HEK293 (cell line): ENCODE measurements at regions of chr5 and their contacts with region 1.

Region 1: DNA sequence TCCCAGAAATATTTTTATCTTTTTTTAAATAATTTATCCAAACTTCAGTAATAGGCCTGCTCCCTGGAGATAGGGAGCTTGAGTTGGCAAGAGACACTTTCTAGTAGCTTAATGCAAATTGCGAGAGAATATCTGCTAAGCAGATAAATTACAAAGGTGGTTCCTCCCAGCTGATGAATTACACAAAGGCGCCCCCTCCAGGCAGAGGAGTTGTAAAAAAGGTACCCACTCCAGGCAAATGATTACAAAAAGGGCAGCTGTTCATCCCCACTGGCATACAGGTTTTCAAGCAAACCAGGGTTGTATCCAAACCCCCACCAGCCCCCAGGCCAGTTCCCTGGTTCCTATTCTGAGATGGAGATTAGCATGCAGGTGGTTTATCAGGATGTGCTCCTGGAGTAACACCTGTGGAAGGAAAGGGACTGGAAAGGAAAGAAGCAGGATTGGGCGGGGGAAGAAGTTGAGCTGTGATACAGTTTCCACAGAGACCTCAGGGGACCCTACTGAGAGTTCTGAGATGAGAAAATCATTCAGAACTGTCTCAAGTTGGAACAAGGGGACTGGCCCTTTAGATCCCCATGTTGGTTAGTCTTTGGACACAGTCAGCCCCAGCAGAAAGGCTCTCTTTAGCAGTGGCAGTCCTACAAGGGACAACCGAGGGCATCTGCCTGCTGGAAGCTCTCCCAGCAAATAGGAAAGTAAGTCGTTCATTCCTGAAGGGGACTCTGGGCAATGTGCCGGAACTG is 25.5 kb downstream of the ESM1 start:
- H3K4me3 ChIP-seq: no peak overlapping the region
- H3K27ac ChIP-seq: no peak overlapping the region
- H3K4me1 ChIP-seq: no peaks in the 10 kb centered on the region
- CTCF ChIP-seq: no peak

Region 2: DNA sequence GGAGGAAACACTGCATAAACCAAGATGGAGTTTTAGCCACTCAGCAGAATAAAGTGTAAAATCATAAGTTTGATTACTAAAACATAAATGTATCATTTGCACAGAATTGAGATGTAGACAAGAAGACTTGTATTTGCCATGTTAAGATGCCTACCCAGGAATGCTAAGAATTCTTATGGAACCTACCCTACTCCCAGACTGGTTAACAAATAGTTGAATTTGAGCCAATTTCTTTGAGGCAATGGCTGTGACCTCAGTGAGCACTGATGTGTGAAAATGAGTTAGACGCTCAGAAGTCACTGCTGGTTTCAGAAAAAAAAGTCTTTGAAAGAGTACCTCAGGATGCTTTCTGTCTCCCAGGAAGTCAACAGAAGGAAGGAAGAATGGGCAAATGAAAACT is 70.0 kb before region 1 on chr5:
- CTCF ChIA-PET with region 1: no interaction called
- POLR2A ChIA-PET with region 1: no interaction called
- H3K4me3 ChIP-seq: no peak overlapping the region
- H3K27ac ChIP-seq: no peak overlapping the region
- H3K4me1 ChIP-seq: no peaks in the 10 kb centered on the region
- CTCF ChIP-seq: no peak

Region 3: DNA sequence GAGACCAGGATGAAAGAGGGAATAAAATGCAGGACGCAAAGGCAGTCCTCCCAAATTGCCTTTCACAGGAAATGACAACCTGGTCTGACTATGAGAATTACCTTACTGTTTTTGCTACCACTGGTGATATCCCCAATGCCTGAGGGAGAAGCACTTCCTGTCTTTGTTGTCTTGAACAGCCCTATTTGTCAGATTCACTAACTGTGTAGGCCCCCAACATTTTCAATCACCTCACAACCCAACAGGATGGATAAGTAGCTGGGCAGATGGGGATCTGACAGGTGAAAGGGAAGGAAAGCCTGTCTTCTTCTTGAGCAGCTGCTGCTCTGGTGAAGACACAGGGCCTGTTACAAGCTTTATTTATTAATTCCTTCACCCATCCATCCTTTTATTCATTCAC is 15.9 kb after region 1 on chr5:
- CTCF ChIA-PET with region 1: interaction called, 10 read pairs
- POLR2A ChIA-PET with region 1: interaction called, 3 read pairs
- H3K4me3 ChIP-seq: no peak overlapping the region
- H3K27ac ChIP-seq: no peak overlapping the region
- H3K4me1 ChIP-seq: no peaks in the 10 kb centered on the region
- CTCF ChIP-seq: no peak

Region 4: GRCh38 chr5:55146543-55147151 is 186.8 kb after region 1 on chr5:
- CTCF ChIA-PET with region 1: interaction called, 11 read pairs
- POLR2A ChIA-PET with region 1: no interaction called
- H3K4me3 ChIP-seq: no peak overlapping the region
- H3K27ac ChIP-seq: no peak overlapping the region
- H3K4me1 ChIP-seq: no peaks in the 10 kb centered on the region
- CTCF ChIP-seq: peak; percentile 84